ENCODE measurements at regions of chr15 and their contacts with region 1.

Region 1: GRCh38 chr15:77633134-77633912 is 611 bp upstream of the LINGO1 start:
- DNase-seq: peak; percentile 84 to 96 (median 90)
- H3K4me3 ChIP-seq: peak overlapping the region; percentile 47 to 81 (median 68)
- H3K27ac ChIP-seq: peak overlapping the region in 57 of 59 donors; percentile 36 to 95 (median 86)
- H3K27me3 ChIP-seq: peaks cover 0 to 14% (median 0%) of the 10 kb centered on the region in 45 donors
- CTCF ChIP-seq: peak; percentile 92 to 100 (median 100)

Region 2: GRCh38 chr15:76931397-76932007 is 701.8 kb before region 1 on chr15 and contains the start of gene RCN2:
- intact Hi-C with region 1: loop called in 1 of 2 experiments (anchors 10 kb)
- DNase-seq: peak; percentile 90 to 98 (median 95)
- H3K4me3 ChIP-seq: peak within 1 kb of the TSS; percentile 45 to 100 (median 83)
- H3K27ac ChIP-seq: peak within 1 kb of the TSS; percentile 41 to 96 (median 87)
- H3K27me3 ChIP-seq: no peaks in the 10 kb centered on the region
- CTCF ChIP-seq: peak in 41 of 56 donors; percentile 3 to 66 (median 32)
- total RNA-seq, gene RCN2: 30.8 to 80.2 (median 58.9) TPM

Region 3: GRCh38 chr15:77186594-77187011 is 446.7 kb before region 1 on chr15:
- intact Hi-C with region 1: loop called in 1 of 2 experiments (anchors 10 kb)
- DNase-seq: no peak
- H3K4me3 ChIP-seq: no peak overlapping the region
- H3K27ac ChIP-seq: peak overlapping the region in 44 of 59 donors; percentile 32 to 85 (median 68)
- H3K27me3 ChIP-seq: no peaks in the 10 kb centered on the region
- CTCF ChIP-seq: peak; percentile 39 to 79 (median 65)

Region 4: GRCh38 chr15:77550292-77551251 is 82.8 kb before region 1 on chr15:
- intact Hi-C with region 1: loop called (anchors 5 kb)
- DNase-seq: no peak
- H3K4me3 ChIP-seq: no peak overlapping the region
- H3K27ac ChIP-seq: peak overlapping the region in 42 of 59 donors; percentile 3 to 85 (median 55)
- H3K27me3 ChIP-seq: no peaks in the 10 kb centered on the region
- CTCF ChIP-seq: no peak

Region 5: DNA sequence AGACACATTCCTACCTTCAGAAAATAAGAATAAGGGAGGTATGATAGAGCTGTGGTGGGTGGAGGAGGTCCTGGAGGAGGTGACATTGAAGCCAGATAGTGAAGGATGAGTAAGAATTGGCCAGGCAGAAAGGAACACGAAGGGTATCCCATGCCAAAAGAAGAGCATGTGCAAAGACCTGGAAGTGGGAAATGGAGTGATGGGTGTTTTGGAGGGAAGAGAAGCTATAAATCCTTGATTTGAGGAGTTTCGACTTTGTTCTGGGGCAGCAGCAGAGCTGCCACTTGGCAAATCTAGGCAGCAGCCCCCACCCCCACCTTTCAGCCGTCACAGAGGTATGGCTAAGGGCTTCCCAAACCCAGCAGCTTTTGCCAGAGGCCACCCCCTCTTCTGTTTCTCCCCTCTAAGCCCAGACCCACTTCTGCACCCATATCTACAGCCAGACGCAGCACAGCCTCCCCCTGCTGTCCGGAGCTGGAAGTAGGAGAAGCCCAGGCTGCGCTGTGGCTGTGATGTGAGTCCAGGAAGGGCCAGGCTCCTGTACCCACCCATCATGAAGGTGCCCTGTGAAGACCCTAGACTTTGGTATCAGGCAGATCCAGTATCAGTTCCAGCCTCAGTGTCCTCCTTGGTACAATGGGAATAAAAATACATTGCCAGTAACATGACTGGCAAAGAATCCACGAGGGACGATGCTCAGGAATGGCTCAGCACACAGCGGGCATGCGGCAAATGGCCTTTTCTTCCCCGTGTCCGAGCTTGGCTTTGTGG is 188.1 kb after region 1 on chr15:
- intact Hi-C with region 1: loop called (anchors 1 kb)
- DNase-seq: peak; percentile 70 to 87 (median 82)
- H3K4me3 ChIP-seq: peak overlapping the region in 27 of 59 donors; percentile 2 to 73 (median 61)
- H3K27ac ChIP-seq: peak overlapping the region in 41 of 59 donors; percentile 2 to 92 (median 64)
- H3K27me3 ChIP-seq: peaks cover 0 to 27% (median 2%) of the 10 kb centered on the region in 45 donors
- CTCF ChIP-seq: peak; percentile 30 to 90 (median 76)

Measured in dorsolateral prefrontal cortex (tissue), 120 donors.